ENCODE measurements at regions of chr12 and their contacts with region 1.

Region 1: DNA sequence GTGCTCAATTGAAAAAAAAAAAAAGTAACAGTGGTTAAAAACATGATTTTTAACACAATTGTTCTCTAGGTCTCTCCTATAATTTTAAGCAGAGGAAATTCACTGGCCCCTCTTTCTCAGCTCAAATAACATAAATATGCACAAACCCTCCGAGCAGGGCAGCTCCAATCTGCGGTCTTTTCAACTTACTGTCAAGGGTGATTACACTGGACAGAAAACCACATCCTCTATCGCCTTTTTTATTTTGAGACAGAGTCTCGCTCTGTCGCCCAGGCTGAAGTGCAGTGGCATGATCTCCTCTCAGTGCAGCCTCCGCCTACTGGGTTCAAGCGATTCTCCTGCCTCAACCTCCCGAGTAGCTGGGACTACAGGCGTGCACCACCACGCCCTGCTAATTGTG is 16.5 kb upstream of the GABARAPL1 start:
- DNase-seq: no peak
- H3K4me3 ChIP-seq: no peak overlapping the region
- H3K27ac ChIP-seq: no peak overlapping the region
- H3K4me1 ChIP-seq: peaks cover 18% of the 10 kb centered on the region
- H3K27me3 ChIP-seq: no peaks in the 10 kb centered on the region
- CTCF ChIP-seq: no peak

Region 2: GRCh38 chr12:10058387-10058786 is 137.8 kb before region 1 on chr12:
- CTCF ChIA-PET with region 1: no interaction called
- POLR2A ChIA-PET with region 1: no interaction called
- intact Hi-C with region 1: no loop called
- DNase-seq: no peak
- H3K4me3 ChIP-seq: no peak overlapping the region
- H3K27ac ChIP-seq: no peak overlapping the region
- H3K4me1 ChIP-seq: no peaks in the 10 kb centered on the region
- H3K27me3 ChIP-seq: no peaks in the 10 kb centered on the region
- CTCF ChIP-seq: no peak

Region 3: GRCh38 chr12:10069099-10069498 is 127.1 kb before region 1 on chr12:
- CTCF ChIA-PET with region 1: interaction called, 12 read pairs
- POLR2A ChIA-PET with region 1: no interaction called
- intact Hi-C with region 1: no loop called
- DNase-seq: no peak
- H3K4me3 ChIP-seq: no peak overlapping the region
- H3K27ac ChIP-seq: no peak overlapping the region
- H3K4me1 ChIP-seq: no peaks in the 10 kb centered on the region
- H3K27me3 ChIP-seq: no peaks in the 10 kb centered on the region
- CTCF ChIP-seq: no peak

Region 4: GRCh38 chr12:10121278-10121677 is 74.9 kb before region 1 on chr12:
- CTCF ChIA-PET with region 1: no interaction called
- POLR2A ChIA-PET with region 1: no interaction called
- intact Hi-C with region 1: no loop called
- DNase-seq: no peak
- H3K4me3 ChIP-seq: no peak overlapping the region
- H3K27ac ChIP-seq: no peak overlapping the region
- H3K4me1 ChIP-seq: no peaks in the 10 kb centered on the region
- H3K27me3 ChIP-seq: no peaks in the 10 kb centered on the region
- CTCF ChIP-seq: no peak

Region 5: DNA sequence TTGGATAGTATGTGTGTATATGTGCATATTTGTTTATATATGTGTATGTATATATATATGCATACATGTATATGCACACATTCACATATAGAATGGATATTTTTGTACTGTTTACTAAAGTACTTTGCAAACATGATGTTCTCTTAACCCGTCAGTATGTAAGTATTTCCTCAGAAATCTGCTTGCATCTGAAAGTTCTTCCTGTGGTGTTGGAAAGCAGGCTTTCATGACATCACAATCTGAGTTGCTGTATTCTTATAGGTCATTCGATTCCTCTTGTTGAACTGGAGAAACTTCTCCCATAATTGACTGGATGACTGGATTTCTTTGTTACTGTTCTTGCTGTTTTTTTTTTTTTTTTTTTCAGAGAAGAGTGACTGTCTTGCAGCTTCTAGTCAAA is 45.5 kb after region 1 on chr12:
- CTCF ChIA-PET with region 1: no interaction called
- POLR2A ChIA-PET with region 1: interaction called, 14 read pairs
- intact Hi-C with region 1: no loop called
- DNase-seq: no peak
- H3K4me3 ChIP-seq: no peak overlapping the region
- H3K27ac ChIP-seq: no peak overlapping the region
- H3K4me1 ChIP-seq: no peaks in the 10 kb centered on the region
- H3K27me3 ChIP-seq: no peaks in the 10 kb centered on the region
- CTCF ChIP-seq: no peak

Region 6: DNA sequence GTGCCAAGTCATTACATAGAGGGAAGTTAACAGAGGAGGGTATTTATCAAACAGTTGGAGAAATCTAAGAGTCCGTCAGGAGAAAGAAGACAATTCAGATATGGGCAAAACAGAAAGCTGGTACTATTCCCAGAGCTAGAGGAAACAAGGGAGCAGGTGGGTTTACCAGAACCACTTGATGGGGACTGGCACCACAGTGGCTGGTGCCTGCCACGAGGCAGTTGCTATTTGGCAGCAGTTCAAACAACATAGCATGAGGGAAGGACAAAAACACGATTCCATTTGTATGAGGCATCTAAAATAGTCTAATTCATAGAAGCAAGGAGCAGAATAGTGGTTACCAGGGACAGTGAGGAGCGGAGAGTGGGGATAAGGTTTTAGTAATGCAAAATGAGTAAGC is 86.8 kb after region 1 on chr12:
- CTCF ChIA-PET with region 1: no interaction called
- POLR2A ChIA-PET with region 1: no interaction called
- intact Hi-C with region 1: no loop called
- DNase-seq: no peak
- H3K4me3 ChIP-seq: no peak overlapping the region
- H3K27ac ChIP-seq: no peak overlapping the region
- H3K4me1 ChIP-seq: no peaks in the 10 kb centered on the region
- H3K27me3 ChIP-seq: no peaks in the 10 kb centered on the region
- CTCF ChIP-seq: no peak